ENCODE measurements at regions of chr5 and their contacts with region 1.

Region 1: DNA sequence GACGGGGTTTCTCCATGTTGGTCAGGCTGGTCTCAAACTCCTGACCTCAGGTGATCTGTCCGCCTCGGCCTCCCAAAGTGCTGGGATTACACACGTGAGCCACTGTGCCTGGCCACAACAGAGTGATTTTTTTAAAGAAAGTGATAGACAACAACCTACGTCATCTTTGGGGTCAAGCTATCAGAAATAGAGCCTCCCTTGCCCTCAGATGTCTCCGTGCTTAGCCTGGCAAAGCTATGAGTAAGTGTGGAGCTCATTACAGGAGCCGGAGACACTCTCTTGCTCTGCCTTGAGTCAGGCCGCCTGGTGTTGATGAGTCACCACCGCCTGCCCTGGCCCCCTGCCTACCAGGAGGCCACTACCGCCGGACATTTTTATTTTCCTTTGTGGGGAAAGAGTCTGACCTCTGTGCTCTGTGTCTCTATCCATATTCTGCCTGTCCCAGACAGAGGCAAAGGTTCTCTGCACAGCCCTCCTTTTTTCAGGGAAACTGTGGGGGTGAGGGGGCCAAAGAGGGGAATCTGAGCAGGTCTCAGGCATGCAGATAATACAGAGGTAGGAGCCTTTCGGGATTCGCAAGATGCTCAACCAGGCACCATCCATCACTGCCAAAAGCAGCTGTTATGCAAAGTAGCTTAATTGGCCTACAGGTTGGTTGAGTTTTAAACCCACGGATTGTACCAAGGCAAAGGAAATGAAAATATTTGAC is 123.7 kb upstream of the CPEB4 start:
- DNase-seq: peak; percentile 92
- H3K4me3 Mint-ChIP-seq: peak overlapping the region; percentile 27
- H3K27ac Mint-ChIP-seq: peak overlapping the region; percentile 96
- H3K4me1 Mint-ChIP-seq: peaks cover 51% of the 10 kb centered on the region
- H3K27me3 Mint-ChIP-seq: no peaks in the 10 kb centered on the region
- CTCF ChIP-seq: no peak

Region 2: DNA sequence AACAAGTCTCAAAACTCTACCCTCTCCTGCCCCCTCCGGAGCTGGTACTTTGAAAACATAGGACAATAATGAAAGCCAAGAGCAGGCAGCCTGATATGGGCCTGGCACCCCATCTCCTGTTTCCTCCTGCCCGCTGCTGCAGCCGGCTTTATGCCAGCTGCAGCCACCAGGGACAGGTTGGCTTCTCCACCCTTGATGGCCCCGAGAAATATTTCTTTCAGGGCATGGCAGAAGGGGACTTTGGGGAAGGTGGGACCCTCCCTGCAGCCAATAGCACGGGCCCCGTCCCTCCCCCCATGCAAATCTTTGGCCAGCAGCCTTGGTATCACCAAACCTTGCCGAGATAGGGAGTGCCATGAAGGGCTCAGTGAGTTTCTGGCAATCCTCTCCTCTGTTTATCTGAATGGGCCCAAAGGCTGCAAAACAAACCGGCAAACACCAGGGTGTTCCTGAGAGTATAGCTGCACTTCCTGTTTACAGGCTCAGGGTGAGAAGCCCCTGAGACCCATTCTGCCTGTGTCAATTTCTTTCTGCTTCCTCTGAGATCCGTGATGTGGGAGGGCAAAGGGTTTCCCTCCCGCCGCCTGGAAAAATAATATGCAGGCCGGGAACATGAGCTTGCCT is 74.6 kb before region 1 on chr5:
- CTCF ChIA-PET with region 1: interaction called, 5 read pairs
- intact Hi-C with region 1: loop called (anchors 5 kb)
- DNase-seq: peak; percentile 35
- H3K4me3 Mint-ChIP-seq: peak overlapping the region; percentile 28
- H3K27ac Mint-ChIP-seq: peak overlapping the region; percentile 66
- H3K4me1 Mint-ChIP-seq: peaks cover 27% of the 10 kb centered on the region
- H3K27me3 Mint-ChIP-seq: no peaks in the 10 kb centered on the region
- CTCF ChIP-seq: no peak

Region 3: DNA sequence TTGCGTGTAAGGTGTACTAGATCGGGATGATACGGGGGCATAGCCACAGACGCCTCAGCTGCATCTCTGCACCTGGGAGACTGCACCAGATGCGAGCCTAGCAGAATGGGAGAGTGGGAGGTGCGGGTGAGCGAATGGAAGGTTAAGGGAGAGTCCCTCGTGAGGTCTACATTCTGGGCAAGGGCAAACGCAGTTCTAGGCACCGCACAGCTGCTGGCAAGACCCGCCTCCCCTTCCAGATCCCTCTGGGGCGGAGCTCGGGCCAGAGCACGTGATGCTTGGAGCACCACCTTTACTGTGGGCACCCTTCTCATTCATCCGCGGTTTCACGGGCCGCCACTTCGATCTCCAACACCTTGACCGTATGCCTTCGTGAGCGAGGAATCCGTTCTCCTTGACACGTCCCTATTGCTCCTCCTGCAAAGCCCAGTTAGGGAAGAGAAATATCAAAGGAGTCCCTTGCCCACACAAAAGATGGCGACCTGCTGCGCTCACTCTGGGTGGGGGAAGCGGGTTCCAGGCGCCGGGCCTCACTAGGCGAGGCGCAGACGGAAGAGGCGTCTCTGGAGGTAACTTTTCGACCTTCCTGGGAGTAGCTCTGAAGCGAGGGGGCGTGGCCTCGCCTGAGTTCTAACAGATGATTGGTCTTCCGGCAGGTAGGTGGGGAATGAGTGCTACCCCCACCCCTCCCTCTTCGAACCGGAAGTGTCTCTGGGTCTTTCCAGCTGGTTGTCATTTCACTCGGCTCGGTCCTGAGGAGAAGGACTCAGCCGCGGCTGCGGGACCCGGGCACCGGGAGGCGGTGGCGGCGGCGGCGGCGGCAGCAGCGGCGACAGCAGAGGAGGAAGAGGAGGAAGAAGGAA is 123.4 kb after region 1 on chr5 and contains the start of gene CPEB4:
- CTCF ChIA-PET with region 1: interaction called, 5 read pairs
- intact Hi-C with region 1: loop called (anchors 2 kb)
- DNase-seq: peak; percentile 99
- H3K4me3 Mint-ChIP-seq: peak within 1 kb of the TSS; percentile 90
- H3K27ac Mint-ChIP-seq: peak within 1 kb of the TSS; percentile 100
- H3K4me1 Mint-ChIP-seq: peaks cover 74% of the 10 kb centered on the region
- H3K27me3 Mint-ChIP-seq: no peaks in the 10 kb centered on the region
- CTCF ChIP-seq: no peak
- total RNA-seq, gene CPEB4: 30.8 and 32.0 TPM in 2 replicates

Region 4: DNA sequence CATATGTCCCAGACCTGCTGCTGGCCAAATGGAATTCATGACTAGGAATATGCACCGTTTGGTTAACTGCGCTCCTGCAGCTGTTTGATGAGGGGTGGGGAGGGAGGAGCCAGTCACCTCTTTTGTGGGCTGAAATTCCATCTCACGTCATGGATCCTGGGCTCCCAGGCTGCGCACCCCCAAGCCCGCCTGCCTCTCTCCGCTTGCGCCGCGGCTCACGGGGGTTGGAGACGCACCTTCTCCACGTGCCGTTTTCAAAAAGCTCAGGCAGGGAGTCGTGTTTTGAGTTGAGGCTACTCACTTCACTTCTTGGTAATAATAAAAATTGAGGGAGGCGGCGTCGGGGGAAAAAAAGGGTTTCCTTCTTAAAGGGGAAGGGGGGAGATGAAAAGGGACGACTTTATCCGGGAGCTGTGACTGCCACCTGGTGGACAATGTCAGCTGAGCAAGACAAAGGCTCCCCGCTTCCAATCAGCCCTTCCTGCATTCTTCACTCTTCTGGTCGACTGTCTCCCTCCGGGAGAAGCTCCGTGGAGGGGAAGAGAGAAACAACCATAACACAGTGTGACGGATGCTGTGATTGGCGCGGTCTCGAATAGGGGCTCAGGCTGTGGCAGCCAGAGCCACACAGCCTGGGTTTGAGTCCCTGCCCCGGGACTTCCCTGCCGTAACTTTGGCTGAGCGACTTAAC is 208.6 kb after region 1 on chr5:
- CTCF ChIA-PET with region 1: interaction called, 6 read pairs
- intact Hi-C with region 1: loop called (anchors 2 kb)
- DNase-seq: peak; percentile 85
- H3K4me3 Mint-ChIP-seq: peak overlapping the region; percentile 73
- H3K27ac Mint-ChIP-seq: peak overlapping the region; percentile 60
- H3K4me1 Mint-ChIP-seq: peaks cover 22% of the 10 kb centered on the region
- H3K27me3 Mint-ChIP-seq: peaks cover 21% of the 10 kb centered on the region
- CTCF ChIP-seq: peak; percentile 82

Region 5: GRCh38 chr5:173984218-173984617 is 219.7 kb after region 1 on chr5:
- CTCF ChIA-PET with region 1: no interaction called
- intact Hi-C with region 1: no loop called
- DNase-seq: peak; percentile 34
- H3K4me3 Mint-ChIP-seq: no peak overlapping the region
- H3K27ac Mint-ChIP-seq: no peak overlapping the region
- H3K4me1 Mint-ChIP-seq: no peaks in the 10 kb centered on the region
- H3K27me3 Mint-ChIP-seq: peaks cover 56% of the 10 kb centered on the region
- CTCF ChIP-seq: peak; percentile 51